ENCODE measurements at regions of chr20 and their contacts with region 1.

Region 1: DNA sequence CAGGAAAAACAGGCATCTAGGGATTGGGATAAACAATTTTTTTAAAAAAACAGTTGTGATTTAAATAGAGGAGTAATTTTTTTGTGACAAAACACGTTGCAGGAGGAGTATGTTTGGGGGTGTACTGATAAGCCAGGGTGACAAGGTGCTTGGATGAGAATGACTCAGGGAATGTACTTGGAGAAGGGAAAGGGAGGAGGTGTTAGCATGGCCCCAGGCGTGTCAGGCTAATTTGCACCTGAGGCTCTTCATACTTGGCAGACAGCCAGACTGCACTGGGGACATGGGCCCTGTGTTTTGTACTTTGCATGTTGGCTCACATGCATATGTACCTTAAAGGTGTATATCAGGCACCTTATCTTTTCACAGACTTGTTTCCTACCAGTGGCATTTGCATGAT is 22.8 kb downstream of the PANK2 start:
- DNase-seq: no peak
- H3K4me3 ChIP-seq: no peak overlapping the region
- H3K27ac ChIP-seq: 0 out of 2 replicates have a peak overlapping the region, but pooled peaks have one; percentile 9
- H3K4me1 ChIP-seq: no peaks in the 10 kb centered on the region
- H3K27me3 ChIP-seq: no peaks in the 10 kb centered on the region
- CTCF ChIP-seq: no peak

Region 2: GRCh38 chr20:3875378-3875974 is 36.5 kb before region 1 on chr20:
- CTCF ChIA-PET with region 1: interaction called, 11 read pairs
- POLR2A ChIA-PET with region 1: interaction called, 5 read pairs
- intact Hi-C with region 1: no loop called
- DNase-seq: no peak
- H3K4me3 ChIP-seq: no peak overlapping the region
- H3K27ac ChIP-seq: no peak overlapping the region
- H3K4me1 ChIP-seq: peaks cover 18% of the 10 kb centered on the region
- H3K27me3 ChIP-seq: no peaks in the 10 kb centered on the region
- CTCF ChIP-seq: no peak

Measured in PC-9 (cell line).